Activated CD8-positive, alpha-beta T cell treated with anti-CD3 and anti-CD28 coated beads for 36 hours (primary cell): ENCODE measurements at regions of chr17 and their contacts with region 1.

Region 1: DNA sequence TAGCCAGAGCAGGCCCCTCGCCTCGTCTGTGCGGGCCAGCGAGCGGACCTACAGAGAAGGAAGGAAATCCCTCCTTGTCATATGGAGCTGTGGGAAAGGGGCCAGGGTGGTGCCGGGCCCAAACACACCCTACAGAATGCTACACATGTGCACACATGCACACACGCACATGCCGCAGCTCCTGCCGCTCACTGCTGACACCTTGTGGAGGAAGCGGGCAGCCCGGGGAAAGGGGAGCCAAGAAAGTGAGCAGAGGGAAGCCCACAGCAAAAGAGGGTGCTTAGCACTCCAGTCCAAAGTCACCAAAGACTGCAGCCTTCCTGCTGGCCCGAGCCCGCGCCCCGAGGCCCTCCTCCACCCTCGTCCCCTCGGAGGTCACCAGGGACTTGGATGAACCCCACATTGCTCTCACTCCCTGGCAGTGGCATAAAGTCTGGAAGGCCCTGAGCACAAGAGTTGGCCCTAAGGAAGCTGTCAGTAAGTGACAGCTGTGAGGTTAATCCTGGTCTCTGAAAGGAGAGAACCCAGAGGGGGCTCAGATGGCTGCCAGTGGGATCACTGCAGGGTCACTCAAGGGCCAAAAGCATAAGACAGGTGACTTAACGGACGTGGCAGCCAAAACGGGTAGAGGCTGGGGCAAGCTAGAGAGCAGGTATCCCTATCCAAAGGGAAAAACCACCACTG is 68.2 kb downstream of the MYO18A start:
- DNase-seq: peak; percentile 79
- ATAC-seq: peak; percentile 87
- H3K4me3 Mint-ChIP-seq: no peak overlapping the region
- H3K27ac Mint-ChIP-seq: no peak overlapping the region
- H3K4me1 Mint-ChIP-seq: peaks cover 9% of the 10 kb centered on the region
- H3K27me3 Mint-ChIP-seq: no peaks in the 10 kb centered on the region
- CTCF ChIP-seq: peak; percentile 91

Region 2: GRCh38 chr17:28755486-28755885 is 356.5 kb before region 1 on chr17:
- CTCF ChIA-PET with region 1: no interaction called
- POLR2A ChIA-PET with region 1: no interaction called
- intact Hi-C with region 1: no loop called
- DNase-seq: no peak
- ATAC-seq: no peak
- H3K4me3 Mint-ChIP-seq: no peak overlapping the region
- H3K27ac Mint-ChIP-seq: no peak overlapping the region
- H3K4me1 Mint-ChIP-seq: peaks cover 6% of the 10 kb centered on the region
- H3K27me3 Mint-ChIP-seq: no peaks in the 10 kb centered on the region
- CTCF ChIP-seq: no peak

Region 3: DNA sequence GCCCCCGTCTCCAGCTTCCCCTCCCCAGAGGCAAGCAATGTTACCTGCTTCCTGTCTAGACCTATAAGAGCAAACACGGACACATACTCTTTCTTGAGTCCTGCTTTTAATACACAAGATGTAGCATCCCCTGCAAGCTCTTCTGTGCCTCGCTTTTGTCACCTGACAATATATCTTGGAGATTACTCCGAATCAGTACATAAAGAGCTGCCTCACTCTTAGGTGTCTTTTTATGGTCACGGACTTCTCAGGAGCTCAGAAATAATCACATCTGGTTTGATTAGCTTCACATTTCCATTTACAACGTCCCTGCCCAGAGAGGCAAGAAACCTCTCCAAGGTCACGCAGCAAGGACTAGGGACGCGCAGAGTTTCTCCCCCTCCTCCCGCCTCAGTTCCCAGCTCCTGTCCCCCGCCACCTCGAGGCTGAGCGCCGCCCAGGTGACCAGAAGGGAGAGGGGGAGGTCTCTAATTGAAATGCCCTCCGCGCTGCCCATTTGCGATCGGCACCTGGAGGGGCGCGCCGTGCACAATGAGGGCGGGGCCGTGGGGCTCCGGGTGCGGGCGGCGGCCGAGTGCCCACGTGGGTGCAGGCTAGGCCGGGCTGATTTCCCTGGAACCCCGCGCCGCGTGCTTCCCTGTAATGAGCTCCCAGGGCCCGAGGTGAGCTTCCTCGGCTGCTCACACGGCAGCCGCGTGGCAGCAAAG is 92.3 kb before region 1 on chr17:
- CTCF ChIA-PET with region 1: interaction called, 22 read pairs
- POLR2A ChIA-PET with region 1: no interaction called
- intact Hi-C with region 1: no loop called
- DNase-seq: peak; percentile 7
- ATAC-seq: peak; percentile 45
- H3K4me3 Mint-ChIP-seq: no peak overlapping the region
- H3K27ac Mint-ChIP-seq: no peak overlapping the region
- H3K4me1 Mint-ChIP-seq: peaks cover 6% of the 10 kb centered on the region
- H3K27me3 Mint-ChIP-seq: peaks cover 41% of the 10 kb centered on the region
- CTCF ChIP-seq: no peak

Region 4: DNA sequence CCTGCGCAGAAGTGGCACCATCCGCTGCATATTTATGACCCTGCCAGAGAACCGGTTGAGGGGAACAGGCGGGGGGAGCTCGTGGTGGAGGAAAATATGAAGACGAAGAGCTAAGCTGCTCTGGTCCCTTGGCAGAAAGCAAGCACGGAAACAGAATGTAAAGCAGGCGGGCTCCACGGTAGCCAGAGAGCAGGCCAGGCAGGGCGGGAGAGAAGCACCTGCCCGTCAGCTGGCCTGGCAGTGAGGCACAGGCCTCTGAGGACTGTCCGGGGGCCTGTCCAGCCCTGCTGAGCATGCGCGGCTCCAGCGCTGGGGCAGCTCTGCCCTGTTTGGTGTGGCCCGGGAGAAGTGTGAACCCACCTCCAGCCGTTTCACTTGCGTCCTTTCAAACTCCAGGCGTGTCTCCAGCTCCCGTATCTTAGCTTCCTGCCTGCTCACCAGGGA is 22.3 kb before region 1 on chr17:
- CTCF ChIA-PET with region 1: interaction called, 33 read pairs
- POLR2A ChIA-PET with region 1: interaction called, 5 read pairs
- intact Hi-C with region 1: no loop called
- DNase-seq: no peak
- ATAC-seq: no peak
- H3K4me3 Mint-ChIP-seq: no peak overlapping the region
- H3K27ac Mint-ChIP-seq: no peak overlapping the region
- H3K4me1 Mint-ChIP-seq: no peaks in the 10 kb centered on the region
- H3K27me3 Mint-ChIP-seq: no peaks in the 10 kb centered on the region
- CTCF ChIP-seq: no peak